Aorta (tissue), 5 donors: ENCODE measurements at regions of chr12 and their contacts with region 1.

Region 1: DNA sequence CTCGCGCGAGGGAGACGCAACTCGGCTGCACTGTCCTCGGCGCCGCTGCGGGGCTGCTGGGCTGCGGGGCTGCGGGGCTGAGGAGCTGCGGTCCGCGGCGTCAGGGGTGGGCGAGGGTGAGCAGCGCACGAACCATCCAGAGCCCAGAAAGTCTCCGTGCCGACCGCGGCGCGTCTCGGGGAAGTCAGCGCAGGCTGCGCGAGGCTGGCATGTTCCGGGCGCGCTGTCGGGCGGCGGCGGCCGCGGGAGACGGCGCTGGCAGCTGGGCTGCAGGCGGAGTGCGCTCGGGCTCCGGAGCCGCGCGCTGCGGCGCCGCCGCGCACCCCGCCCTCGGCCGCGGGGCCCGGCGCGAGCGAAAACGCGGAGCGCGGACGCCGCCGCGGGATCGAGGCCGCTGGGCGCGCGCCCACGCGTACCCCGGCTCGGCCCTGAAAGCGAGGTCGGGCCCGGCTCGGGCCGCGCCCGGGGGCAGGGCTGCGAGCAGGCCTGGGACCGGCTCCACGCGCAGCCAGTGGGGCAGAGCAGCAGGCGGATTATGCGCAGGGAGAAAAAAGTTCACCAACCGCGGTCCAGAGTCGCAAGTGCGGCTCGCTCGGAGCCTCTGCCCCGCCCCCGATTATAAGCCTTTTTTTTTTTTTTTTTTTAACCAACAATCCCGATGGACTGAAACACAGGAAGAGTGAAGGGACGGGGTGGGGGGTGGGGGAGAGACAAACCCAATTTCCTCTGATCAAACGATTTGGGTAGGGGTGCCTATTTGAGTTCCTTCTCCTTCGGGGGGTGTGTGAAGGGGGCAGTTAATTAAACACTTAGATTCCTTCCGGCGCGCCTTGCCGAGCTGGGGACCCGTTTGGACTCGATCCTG is at the start of gene PRICKLE1:
- DNase-seq: peak; percentile 65 to 83
- ATAC-seq: peak; percentile 73
- H3K4me3 ChIP-seq: peak within 1 kb of the TSS; percentile 63 to 84
- H3K27ac ChIP-seq: peak within 1 kb of the TSS in 1 of 2 donors; percentile 13
- H3K4me1 ChIP-seq: no peaks in the 10 kb centered on the region
- H3K27me3 ChIP-seq: no peaks in the 10 kb centered on the region
- total RNA-seq, gene PRICKLE1: 19.3 to 34.9 TPM

Region 2: GRCh38 chr12:42735861-42736361 is 146.2 kb after region 1 on chr12:
- intact Hi-C with region 1: loop called (anchors 5 kb)
- DNase-seq: peak; percentile 48 to 75
- ATAC-seq: no peak
- H3K4me3 ChIP-seq: no peak overlapping the region
- H3K27ac ChIP-seq: no peak overlapping the region
- H3K4me1 ChIP-seq: peaks cover 0 to 4% of the 10 kb centered on the region in 2 donors
- H3K27me3 ChIP-seq: no peaks in the 10 kb centered on the region

Region 3: DNA sequence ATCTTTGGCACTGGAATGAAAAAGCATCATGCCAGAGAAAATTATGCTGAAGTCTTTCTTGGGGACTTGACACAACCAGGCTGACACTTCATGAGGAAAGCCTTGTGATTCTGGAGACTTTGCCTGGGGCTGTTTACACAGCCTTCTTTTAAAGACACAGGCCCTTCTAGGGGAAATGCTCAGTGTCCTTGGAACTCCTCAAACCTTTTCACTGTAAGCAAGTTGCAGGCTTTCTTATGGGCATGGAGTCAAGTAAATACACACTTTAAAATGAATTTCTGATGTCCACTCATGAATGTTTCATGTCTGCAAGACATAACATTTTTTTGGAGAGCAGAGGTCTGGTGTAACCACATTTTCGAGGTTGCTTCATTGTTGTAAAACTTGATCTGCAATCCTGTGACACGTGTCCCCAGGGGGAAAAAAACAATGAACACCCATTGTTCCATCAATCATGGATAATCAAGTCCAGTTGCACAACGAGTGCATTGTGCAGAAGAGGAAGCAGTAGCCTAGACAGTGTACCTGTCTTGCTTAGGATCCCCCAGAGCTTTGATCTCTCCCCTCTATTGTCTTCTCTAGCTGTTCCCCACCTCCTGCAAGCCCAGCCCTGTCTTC is 155.0 kb after region 1 on chr12:
- intact Hi-C with region 1: loop called (anchors 5 kb)
- DNase-seq: no peak
- ATAC-seq: peak; percentile 59
- H3K4me3 ChIP-seq: no peak overlapping the region
- H3K27ac ChIP-seq: peak overlapping the region in 1 of 2 donors; percentile 19
- H3K4me1 ChIP-seq: peaks cover 2 to 15% of the 10 kb centered on the region in 2 donors
- H3K27me3 ChIP-seq: no peaks in the 10 kb centered on the region

Region 4: DNA sequence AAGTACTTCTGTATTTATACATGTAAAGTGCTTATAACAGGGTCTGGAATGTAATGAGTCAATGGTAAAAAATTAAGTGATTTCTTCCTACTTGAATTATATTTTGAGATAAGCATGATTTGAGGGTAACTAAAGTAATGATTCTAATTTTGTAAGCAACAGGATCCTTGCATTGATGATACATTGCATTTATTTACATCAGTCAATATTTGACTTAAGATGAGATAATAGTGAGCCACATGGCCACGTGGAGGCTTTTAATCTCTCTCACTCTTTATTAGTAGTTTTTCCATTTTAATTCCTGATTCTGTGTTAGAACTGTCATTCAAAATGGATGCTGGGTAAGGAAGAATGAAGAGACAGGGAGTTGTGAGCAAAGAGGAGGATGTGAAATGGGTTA is 298.0 kb after region 1 on chr12:
- intact Hi-C with region 1: no loop called
- DNase-seq: no peak
- ATAC-seq: no peak
- H3K4me3 ChIP-seq: no peak overlapping the region
- H3K27ac ChIP-seq: no peak overlapping the region
- H3K4me1 ChIP-seq: no peaks in the 10 kb centered on the region
- H3K27me3 ChIP-seq: no peaks in the 10 kb centered on the region